Mammary epithelial cell (primary cell): ENCODE measurements at regions of chr4 and their contacts with region 1.

Region 1: DNA sequence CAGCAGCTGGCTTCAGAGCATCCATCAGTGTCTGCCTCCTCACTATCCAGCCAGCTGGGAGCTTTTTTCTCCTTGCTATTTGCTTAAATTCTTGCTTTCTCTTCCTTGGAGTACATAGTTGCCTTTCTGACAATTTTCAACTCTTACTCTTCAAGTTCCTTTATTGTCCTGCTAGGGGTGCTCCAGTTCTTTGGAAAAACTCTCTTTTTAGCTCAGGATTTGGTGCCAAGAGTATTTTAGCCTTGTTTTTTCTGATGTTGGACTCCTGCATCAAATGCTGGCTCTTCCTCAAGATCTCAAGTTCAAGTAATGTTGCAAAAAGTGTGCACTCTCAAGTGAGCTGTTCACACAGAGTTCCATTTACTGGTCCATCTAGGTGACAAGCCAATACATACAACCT is 126.4 kb downstream of the KDR start:
- DNase-seq: no peak
- H3K4me3 ChIP-seq: no peak overlapping the region
- H3K27ac ChIP-seq: no peak overlapping the region
- H3K4me1 ChIP-seq: no peaks in the 10 kb centered on the region
- H3K27me3 ChIP-seq: no peaks in the 10 kb centered on the region
- CTCF ChIP-seq: peak; percentile 44 to 58

Region 2: GRCh38 chr4:55312489-55313101 is 313.6 kb after region 1 on chr4:
- CTCF ChIA-PET with region 1: no interaction called
- dilution Hi-C with region 1: no loop called
- in situ Hi-C with region 1: loop called (anchors 10 kb)
- intact Hi-C with region 1: no loop called
- DNase-seq: peak; percentile 25
- H3K4me3 ChIP-seq: no peak overlapping the region
- H3K27ac ChIP-seq: no peak overlapping the region
- H3K4me1 ChIP-seq: no peaks in the 10 kb centered on the region
- H3K27me3 ChIP-seq: no peaks in the 10 kb centered on the region
- CTCF ChIP-seq: peak; percentile 71 to 88

Region 3: DNA sequence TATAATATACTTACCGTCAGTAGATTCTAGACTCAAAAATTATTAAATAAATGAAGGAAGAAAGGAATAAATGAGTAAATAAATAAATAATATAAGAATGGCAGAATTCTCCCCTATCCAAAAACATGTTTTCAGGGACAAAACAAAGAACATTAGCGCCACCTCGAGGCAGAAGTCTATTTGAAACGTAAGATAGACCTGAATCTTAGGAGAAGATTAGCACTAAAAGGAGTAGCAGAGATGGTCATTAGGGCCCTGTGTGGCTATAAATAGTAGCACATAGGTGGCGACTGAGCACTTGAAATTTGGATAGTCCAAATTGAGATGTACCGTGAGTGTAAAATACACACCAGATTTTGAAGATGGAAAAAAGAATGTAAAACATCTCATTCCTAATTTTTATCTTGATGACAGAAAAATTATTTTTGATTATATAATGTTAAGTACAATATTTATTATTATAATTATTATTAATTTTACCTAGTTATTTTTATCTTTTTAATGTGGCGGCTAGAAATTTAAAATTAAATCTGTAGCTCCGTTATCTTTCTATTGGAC is 322.8 kb after region 1 on chr4:
- CTCF ChIA-PET with region 1: no interaction called
- dilution Hi-C with region 1: no loop called
- in situ Hi-C with region 1: loop called (anchors 10 kb)
- intact Hi-C with region 1: loop called (anchors 1 kb)
- DNase-seq: peak; percentile 63
- H3K4me3 ChIP-seq: no peak overlapping the region
- H3K27ac ChIP-seq: no peak overlapping the region
- H3K4me1 ChIP-seq: no peaks in the 10 kb centered on the region
- H3K27me3 ChIP-seq: no peaks in the 10 kb centered on the region
- CTCF ChIP-seq: peak; percentile 61 to 73

Region 4: GRCh38 chr4:55554453-55555030 is 555.5 kb after region 1 on chr4:
- CTCF ChIA-PET with region 1: no interaction called
- dilution Hi-C with region 1: no loop called
- in situ Hi-C with region 1: loop called in 1 of 2 experiments (anchors 25 kb)
- intact Hi-C with region 1: loop called (anchors 1 kb)
- DNase-seq: no peak
- H3K4me3 ChIP-seq: no peak overlapping the region
- H3K27ac ChIP-seq: no peak overlapping the region
- H3K4me1 ChIP-seq: peaks cover 11% of the 10 kb centered on the region
- H3K27me3 ChIP-seq: no peaks in the 10 kb centered on the region
- CTCF ChIP-seq: peak; percentile 12 to 56

Region 5: GRCh38 chr4:55588160-55588559 is 589.2 kb after region 1 on chr4:
- CTCF ChIA-PET with region 1: no interaction called
- dilution Hi-C with region 1: no loop called
- in situ Hi-C with region 1: no loop called
- intact Hi-C with region 1: no loop called
- DNase-seq: no peak
- H3K4me3 ChIP-seq: no peak overlapping the region
- H3K27ac ChIP-seq: no peak overlapping the region
- H3K4me1 ChIP-seq: no peaks in the 10 kb centered on the region
- H3K27me3 ChIP-seq: no peaks in the 10 kb centered on the region
- CTCF ChIP-seq: no peak

Region 6: DNA sequence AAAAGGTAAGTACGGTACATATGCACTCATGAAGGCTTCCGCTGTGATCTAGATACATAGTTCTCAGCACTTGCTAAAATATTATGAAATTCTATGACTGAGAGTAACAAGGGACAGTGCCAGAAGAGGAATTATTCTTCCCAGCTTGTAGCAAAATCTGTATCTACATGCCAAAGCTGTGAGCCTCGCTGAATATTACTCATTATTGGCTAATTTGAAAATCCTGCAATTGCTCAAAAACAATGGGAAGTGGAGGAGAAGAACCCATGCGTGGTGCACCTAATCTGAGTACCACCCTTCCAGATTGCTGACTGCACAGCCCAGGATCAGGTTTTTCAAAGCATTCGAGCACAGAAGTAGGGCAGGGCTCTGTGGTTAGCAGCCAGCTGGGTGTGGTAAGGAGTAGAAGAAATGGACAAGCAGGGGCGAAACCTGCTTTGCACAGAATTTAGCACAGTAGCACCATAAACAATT is 610.4 kb after region 1 on chr4:
- CTCF ChIA-PET with region 1: interaction called, 22 read pairs
- dilution Hi-C with region 1: no loop called
- in situ Hi-C with region 1: no loop called
- intact Hi-C with region 1: no loop called
- DNase-seq: peak; percentile 97
- H3K4me3 ChIP-seq: peak overlapping the region in 1 of 3 experiments; percentile 35
- H3K27ac ChIP-seq: peak overlapping the region; percentile 97
- H3K4me1 ChIP-seq: peaks cover 36% of the 10 kb centered on the region
- H3K27me3 ChIP-seq: no peaks in the 10 kb centered on the region
- CTCF ChIP-seq: no peak